Sigmoid colon (tissue), 7 donors: ENCODE measurements at regions of chr4 and their contacts with region 1.

Region 1: DNA sequence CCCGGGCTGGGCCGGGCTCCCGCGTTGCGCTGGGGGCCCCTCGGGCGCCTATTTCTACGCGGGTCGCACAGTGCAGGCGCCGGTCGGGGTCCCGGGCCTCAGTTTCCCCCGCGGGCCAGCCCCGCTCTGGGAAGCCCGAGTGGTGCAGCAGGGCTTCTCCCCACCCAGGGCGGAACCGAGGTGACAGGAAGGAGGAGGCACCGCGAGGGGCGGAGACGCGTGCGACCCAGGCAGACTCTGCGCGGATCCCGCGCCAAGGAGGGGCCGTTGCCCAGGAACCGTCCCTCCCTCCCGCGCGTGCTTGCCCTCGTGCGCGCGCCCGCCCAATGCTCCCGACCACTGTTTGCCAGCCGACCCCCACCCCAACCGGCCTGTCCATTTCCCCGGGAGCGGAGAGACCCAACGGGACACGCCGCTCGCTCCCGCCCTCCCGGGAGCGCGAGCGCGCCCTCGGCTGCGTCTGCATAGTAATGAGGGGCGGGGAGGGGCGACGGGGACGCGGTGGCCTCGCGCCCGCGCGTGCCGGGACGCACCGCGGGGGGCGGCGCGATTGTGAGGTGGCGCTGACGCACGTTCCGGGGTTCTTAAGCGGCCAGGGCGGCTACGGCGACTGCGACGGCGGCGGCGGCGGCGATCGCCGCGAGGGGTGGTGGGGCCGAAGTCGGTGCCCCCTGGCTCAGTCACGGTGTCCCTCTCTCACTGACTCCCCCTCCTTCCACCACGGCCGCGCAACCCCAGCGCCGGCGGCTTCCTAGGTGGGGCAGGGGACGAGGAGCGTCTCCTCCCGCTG is at the start of gene CPEB2:
- DNase-seq: peak; percentile 98
- H3K4me3 ChIP-seq: peak within 1 kb of the TSS; percentile 95 to 99 (median 98)
- H3K27ac ChIP-seq: peak within 1 kb of the TSS; percentile 96 to 100 (median 100)
- H3K4me1 ChIP-seq: peaks cover 0 to 23% (median 15%) of the 10 kb centered on the region in 4 donors
- H3K27me3 ChIP-seq: no peaks in the 10 kb centered on the region
- CTCF ChIP-seq: no peak
- EP300 ChIP-seq: peak in 1 of 4 donors; percentile 24
- POLR2A ChIP-seq: peak; percentile 97 to 98
- total RNA-seq, gene CPEB2: 27.5 to 39.2 (median 30.4) TPM

Region 2: DNA sequence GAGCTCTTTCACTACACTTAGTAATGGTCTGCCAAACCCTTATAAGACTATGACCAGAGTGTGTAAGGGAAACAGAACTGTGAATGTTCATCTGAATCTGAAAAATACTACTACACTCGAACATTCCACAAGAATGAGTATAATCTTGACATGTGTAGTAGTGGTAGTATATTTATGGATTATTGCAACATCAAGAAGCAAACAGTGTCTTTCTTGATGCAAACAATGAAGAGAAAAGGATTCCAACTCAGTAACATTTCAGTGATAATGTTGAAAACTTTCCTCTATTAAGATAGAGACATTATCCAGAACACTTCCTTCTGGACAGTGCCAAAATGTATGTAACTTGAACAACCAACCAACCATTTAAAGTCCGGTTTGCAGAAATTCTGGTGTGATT is 394.5 kb before region 1 on chr4:
- intact Hi-C with region 1: loop called (anchors 10 kb)
- DNase-seq: no peak
- H3K4me3 ChIP-seq: no peak overlapping the region
- H3K27ac ChIP-seq: peak overlapping the region in 3 of 4 donors; percentile 11 to 30 (median 14)
- H3K4me1 ChIP-seq: peaks cover 0 to 19% (median 12%) of the 10 kb centered on the region in 4 donors
- H3K27me3 ChIP-seq: no peaks in the 10 kb centered on the region
- CTCF ChIP-seq: no peak
- EP300 ChIP-seq: peak in 2 of 4 donors; percentile 21 to 23
- POLR2A ChIP-seq: no peak

Region 3: GRCh38 chr4:15035159-15035558 is 33.1 kb after region 1 on chr4:
- intact Hi-C with region 1: loop called (anchors 5 kb)
- DNase-seq: no peak
- H3K4me3 ChIP-seq: no peak overlapping the region
- H3K27ac ChIP-seq: peak overlapping the region; percentile 3 to 63 (median 52)
- H3K4me1 ChIP-seq: peaks cover 0 to 84% (median 65%) of the 10 kb centered on the region in 4 donors
- H3K27me3 ChIP-seq: no peaks in the 10 kb centered on the region
- CTCF ChIP-seq: no peak
- EP300 ChIP-seq: no peak
- POLR2A ChIP-seq: no peak

Region 4: DNA sequence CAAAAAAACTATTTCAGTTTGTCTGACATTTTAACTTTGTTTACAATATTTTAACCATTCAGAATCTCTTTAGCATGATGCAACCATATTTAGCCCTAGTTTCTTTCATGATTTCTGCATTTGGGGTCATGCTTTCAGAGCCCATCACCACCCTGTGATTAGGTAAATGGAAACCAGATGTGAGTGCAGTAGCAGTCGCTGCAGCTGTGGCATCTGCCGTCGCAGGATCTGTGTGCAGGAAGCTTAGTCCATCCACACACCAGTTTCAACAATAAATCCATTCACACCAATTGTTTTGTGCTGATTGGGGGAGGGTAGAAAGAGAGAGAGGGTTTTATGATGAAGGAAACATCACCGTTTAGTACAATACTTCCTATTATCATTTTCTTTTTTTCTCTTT is 130.7 kb after region 1 on chr4:
- intact Hi-C with region 1: no loop called
- DNase-seq: no peak
- H3K4me3 ChIP-seq: no peak overlapping the region
- H3K27ac ChIP-seq: no peak overlapping the region
- H3K4me1 ChIP-seq: no peaks in the 10 kb centered on the region
- H3K27me3 ChIP-seq: no peaks in the 10 kb centered on the region
- CTCF ChIP-seq: no peak
- EP300 ChIP-seq: no peak
- POLR2A ChIP-seq: no peak

Region 5: DNA sequence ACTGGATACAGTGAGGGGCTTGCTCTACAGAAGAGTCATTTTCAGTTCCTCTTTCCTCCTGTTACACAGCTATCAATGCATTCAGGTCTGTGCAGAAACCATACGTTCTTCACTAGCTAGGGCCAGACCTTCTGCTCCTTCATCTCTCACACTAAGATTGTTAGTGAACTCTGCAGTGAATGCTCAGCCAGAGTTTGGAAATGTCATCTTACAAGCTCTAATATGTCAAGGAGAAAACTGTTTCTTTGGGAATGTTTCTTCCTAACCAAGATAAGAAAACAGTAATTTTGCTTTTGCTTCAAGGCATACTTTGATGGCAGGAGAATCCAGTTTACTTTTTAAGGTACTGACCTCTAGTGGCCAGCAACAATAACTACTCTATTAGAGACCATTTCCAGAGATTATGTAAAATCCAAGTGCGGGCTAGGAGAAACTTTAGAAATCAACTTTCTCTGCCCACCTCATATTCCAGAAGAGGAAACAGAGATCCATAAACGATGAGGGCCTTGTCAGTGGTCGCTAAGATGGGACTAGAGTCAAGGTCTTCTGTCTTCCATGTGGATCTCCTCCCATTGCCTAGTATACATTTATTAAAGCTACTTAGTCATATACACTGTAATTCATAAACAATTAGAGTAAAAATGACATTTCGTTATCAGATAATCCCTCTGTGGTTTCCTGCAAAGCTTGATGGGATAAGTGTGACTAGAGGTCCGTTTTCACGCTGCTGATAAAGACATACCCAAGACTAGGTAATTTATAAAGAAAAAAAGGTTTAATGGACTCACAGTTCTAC is 455.5 kb after region 1 on chr4:
- intact Hi-C with region 1: loop called (anchors 10 kb)
- DNase-seq: no peak
- H3K4me3 ChIP-seq: no peak overlapping the region
- H3K27ac ChIP-seq: peak overlapping the region; percentile 29 to 61 (median 42)
- H3K4me1 ChIP-seq: peaks cover 0 to 21% (median 9%) of the 10 kb centered on the region in 4 donors
- H3K27me3 ChIP-seq: no peaks in the 10 kb centered on the region
- CTCF ChIP-seq: peak; percentile 52 to 76 (median 64)
- EP300 ChIP-seq: no peak
- POLR2A ChIP-seq: no peak